Naive thymus-derived CD4-positive, alpha-beta T cell (primary cell): ENCODE measurements at regions of chr17 and their contacts with region 1.

Region 1: DNA sequence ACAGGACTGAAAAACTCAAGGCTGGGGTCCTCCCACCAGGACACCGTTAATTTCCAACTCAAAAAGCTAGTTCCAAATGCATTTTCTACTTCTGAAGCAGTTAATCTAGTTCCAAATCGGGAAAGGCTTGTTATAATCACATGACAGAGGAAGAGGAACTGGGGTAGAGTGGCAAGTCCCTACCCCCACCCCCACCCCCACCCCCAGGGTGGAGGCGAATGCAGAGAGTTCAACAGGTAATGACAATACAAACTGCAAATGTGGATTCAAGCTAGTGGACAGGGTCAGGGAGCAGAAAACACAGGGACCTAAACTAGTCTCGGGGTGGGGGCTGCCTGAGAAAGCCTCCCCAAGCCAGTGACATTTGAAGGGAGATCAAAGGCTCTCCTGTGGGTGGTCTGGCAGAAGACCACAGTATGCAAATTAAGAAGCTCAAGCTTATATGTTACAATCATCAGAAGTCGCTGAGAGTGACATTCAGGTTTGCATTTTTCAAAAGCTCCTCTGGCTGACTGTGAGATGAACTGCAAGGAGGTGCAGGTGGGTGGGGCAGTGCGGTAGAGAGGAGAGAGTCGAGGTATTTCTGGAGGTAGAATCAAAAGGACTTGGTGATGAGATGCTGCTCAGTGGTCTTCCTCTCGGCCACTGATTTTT is 56.4 kb upstream of the SLC25A19 start:
- DNase-seq: peak in 8 of 9 donors; percentile 36 to 65 (median 53)
- ATAC-seq: peak; percentile 82
- H3K4me3 ChIP-seq: peak overlapping the region; percentile 43
- H3K4me3 Mint-ChIP-seq: peak overlapping the region; percentile 65 to 91 (median 81)
- H3K27ac ChIP-seq: peak overlapping the region; percentile 65
- H3K27ac Mint-ChIP-seq: peak overlapping the region; percentile 76 to 98 (median 93)
- H3K4me1 ChIP-seq: peaks cover 61 to 85% of the 10 kb centered on the region in 2 donors
- H3K4me1 Mint-ChIP-seq: peaks cover 60 to 100% (median 91%) of the 10 kb centered on the region in 7 donors
- H3K27me3 ChIP-seq: no peaks in the 10 kb centered on the region
- H3K27me3 Mint-ChIP-seq: no peaks in the 10 kb centered on the region

Region 2: DNA sequence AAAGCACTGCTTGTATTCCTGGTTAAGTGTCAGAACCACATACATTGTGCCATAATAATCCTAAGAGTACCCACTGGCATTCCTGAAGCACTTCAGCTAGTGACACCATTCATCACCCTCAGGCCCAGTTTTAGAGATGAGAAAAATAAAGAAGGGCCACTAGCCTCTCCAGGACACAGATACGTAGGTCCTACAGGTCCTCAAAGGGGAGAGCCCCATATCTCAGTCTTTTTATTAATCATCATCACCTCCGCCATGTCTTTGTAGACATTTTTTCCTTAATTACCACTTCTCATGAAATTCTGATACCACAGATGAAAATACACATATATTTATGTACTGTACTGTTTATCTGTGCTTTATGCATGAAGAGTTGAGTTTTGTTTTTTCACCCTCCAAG is 16.4 kb after region 1 on chr17:
- CTCF ChIA-PET with region 1: interaction called, 3 read pairs
- POLR2A ChIA-PET with region 1: interaction called, 5 read pairs
- intact Hi-C with region 1: loop called in 1 of 2 experiments (anchors 2 kb)
- DNase-seq: no peak
- ATAC-seq: no peak
- H3K4me3 ChIP-seq: no peak overlapping the region
- H3K4me3 Mint-ChIP-seq: peak overlapping the region in 7 of 10 donors; percentile 13 to 77 (median 45)
- H3K27ac ChIP-seq: no peak overlapping the region
- H3K27ac Mint-ChIP-seq: peak overlapping the region in 6 of 9 donors; percentile 29 to 67 (median 43)
- H3K4me1 ChIP-seq: peaks cover 47 to 66% of the 10 kb centered on the region in 2 donors
- H3K4me1 Mint-ChIP-seq: peaks cover 79 to 93% (median 88%) of the 10 kb centered on the region in 7 donors
- H3K27me3 ChIP-seq: no peaks in the 10 kb centered on the region
- H3K27me3 Mint-ChIP-seq: no peaks in the 10 kb centered on the region